Activated CD4-positive, alpha-beta memory T cell treated with anti-CD3 and anti-CD28 coated beads for 36 hours (primary cell): ENCODE measurements at regions of chr14 and their contacts with region 1.

Region 1: DNA sequence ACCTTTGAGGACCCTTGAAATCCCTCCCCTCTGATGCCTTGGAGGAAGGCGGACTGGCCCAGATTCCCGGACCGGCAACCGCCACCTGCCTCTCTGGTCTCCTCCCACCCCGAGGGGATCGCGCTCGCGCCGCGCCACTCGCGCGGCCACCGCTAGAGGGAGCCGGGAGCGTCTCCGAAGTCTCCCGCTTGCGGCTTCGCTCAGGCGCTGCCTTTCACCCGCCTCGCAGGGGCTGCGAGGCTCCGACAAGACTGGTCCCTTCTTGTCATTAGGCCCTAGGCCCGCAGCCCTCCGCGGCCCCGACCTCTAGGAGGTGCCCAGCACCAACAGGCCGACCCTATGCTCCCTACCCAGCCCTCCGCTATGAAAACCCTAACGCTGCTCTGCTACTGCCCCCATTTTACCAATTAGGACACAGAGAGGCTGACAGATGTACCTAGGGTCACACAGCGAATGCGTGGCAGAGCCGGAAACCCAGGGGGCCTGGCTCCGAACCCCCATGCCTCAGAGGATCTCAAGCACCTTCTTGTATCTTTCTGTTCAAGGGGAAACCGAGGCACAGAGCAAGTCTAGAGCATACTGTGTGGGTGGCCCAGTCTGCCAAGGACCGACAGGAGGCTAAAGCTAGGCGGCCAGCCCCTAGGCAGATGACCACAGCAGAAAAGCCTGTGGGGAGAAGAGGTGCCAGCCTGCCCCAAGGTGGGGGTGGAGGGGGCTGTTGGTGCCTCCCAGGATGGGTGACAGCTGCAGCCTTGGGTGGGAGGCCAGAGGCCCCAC is 21.4 kb upstream of the VSX2 start:
- DNase-seq: peak; percentile 82
- H3K4me3 Mint-ChIP-seq: no peak overlapping the region
- H3K27ac Mint-ChIP-seq: no peak overlapping the region
- H3K4me1 Mint-ChIP-seq: no peaks in the 10 kb centered on the region
- H3K27me3 Mint-ChIP-seq: peaks cover 9% of the 10 kb centered on the region

Region 2: GRCh38 chr14:74249433-74250375 is 31.8 kb after region 1 on chr14:
- CTCF ChIA-PET with region 1: interaction called, 9 read pairs
- POLR2A ChIA-PET with region 1: no interaction called
- intact Hi-C with region 1: loop called (anchors 1 kb)
- DNase-seq: no peak
- H3K4me3 Mint-ChIP-seq: no peak overlapping the region
- H3K27ac Mint-ChIP-seq: no peak overlapping the region
- H3K4me1 Mint-ChIP-seq: peaks cover 6% of the 10 kb centered on the region
- H3K27me3 Mint-ChIP-seq: peaks cover 30% of the 10 kb centered on the region